PC-9 (cell line): ENCODE measurements at regions of chr3 and their contacts with region 1.

Region 1: DNA sequence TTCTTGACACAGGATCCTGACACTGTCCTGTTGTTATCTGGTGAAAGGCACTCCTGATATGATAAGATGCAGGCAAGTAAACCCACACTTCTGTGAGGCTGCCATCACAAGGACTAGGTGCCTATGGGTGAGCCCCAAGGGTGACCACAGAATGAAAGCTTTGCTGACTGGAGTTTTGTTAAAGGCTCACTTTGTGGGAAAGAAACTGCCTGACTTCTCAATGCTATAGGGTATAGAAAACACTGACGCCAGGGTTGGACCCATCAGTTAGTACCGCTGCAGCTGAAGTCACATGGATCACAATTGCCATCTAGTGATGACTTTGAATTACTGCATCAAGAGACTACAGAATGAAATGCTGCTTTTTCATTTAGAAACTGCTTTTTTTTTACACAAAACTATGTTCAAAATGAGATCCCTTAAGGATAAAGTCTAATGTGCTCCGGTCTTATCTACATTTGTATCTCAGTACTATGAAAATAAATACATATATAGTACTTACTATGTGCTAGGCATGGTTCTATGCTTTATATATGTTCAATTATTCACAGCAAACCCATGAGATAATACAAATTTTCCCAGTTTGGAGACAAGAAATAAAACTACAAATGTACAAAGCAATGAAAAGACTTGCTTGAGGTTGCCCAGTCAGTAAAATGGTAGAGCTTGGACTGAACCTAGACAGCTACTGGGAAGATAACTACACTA is 64.2 kb upstream of the CMSS1 start:
- DNase-seq: peak; percentile 39 to 50
- H3K4me3 ChIP-seq: no peak overlapping the region
- H3K27ac ChIP-seq: no peak overlapping the region
- H3K4me1 ChIP-seq: no peaks in the 10 kb centered on the region
- H3K27me3 ChIP-seq: peaks cover 9% of the 10 kb centered on the region; the same call in 1 of the 2 replicates
- CTCF ChIP-seq: peak; percentile 96

Region 2: DNA sequence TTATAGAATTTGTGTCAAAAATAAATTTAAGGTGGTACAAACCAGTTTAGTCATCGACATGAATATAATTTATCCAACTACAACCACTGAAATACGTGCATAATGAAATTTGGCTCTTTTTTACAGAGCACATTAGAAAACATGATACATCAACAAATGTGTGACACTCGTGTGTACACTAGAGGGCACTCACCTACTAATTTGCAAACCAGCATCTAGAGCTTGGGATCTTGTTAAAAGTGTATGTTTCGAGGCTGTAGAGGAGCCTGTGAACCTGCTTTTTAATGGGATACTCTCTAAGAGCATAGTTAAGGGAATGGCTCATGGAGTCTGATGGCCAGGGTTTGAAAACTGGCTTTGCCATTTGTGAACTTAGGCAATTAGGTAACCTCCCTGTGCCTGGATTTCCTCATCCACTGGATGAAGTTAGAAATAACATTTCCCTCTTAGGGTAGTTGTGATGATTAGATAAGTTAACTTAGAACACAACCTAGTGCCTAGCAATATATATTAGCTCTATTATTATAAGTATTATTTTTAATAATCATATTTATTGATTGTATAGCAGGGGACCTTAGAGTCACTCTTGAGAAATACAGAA is 1151.2 kb before region 1 on chr3:
- CTCF ChIA-PET with region 1: interaction called, 3 read pairs
- POLR2A ChIA-PET with region 1: no interaction called
- intact Hi-C with region 1: loop called (anchors 5 kb)
- DNase-seq: peak; percentile 29 to 61
- H3K4me3 ChIP-seq: no peak overlapping the region
- H3K27ac ChIP-seq: no peak overlapping the region
- H3K4me1 ChIP-seq: no peaks in the 10 kb centered on the region
- H3K27me3 ChIP-seq: no peaks in the 10 kb centered on the region
- CTCF ChIP-seq: peak; percentile 95

Region 3: GRCh38 chr3:98994128-98994762 is 759.2 kb before region 1 on chr3:
- CTCF ChIA-PET with region 1: interaction called, 6 read pairs
- POLR2A ChIA-PET with region 1: no interaction called
- intact Hi-C with region 1: loop called (anchors 10 kb)
- DNase-seq: peak in 1 of 2 experiments; percentile 57
- H3K4me3 ChIP-seq: no peak overlapping the region
- H3K27ac ChIP-seq: no peak overlapping the region
- H3K4me1 ChIP-seq: no peaks in the 10 kb centered on the region
- H3K27me3 ChIP-seq: no peaks in the 10 kb centered on the region
- CTCF ChIP-seq: peak; percentile 97

Region 4: GRCh38 chr3:99172736-99173657 is 580.4 kb before region 1 on chr3:
- CTCF ChIA-PET with region 1: interaction called, 3 read pairs
- POLR2A ChIA-PET with region 1: no interaction called
- intact Hi-C with region 1: loop called (anchors 5 kb)
- DNase-seq: peak; percentile 58 to 59
- H3K4me3 ChIP-seq: no peak overlapping the region
- H3K27ac ChIP-seq: no peak overlapping the region
- H3K4me1 ChIP-seq: no peaks in the 10 kb centered on the region
- H3K27me3 ChIP-seq: no peaks in the 10 kb centered on the region
- CTCF ChIP-seq: peak; percentile 97

Region 5: DNA sequence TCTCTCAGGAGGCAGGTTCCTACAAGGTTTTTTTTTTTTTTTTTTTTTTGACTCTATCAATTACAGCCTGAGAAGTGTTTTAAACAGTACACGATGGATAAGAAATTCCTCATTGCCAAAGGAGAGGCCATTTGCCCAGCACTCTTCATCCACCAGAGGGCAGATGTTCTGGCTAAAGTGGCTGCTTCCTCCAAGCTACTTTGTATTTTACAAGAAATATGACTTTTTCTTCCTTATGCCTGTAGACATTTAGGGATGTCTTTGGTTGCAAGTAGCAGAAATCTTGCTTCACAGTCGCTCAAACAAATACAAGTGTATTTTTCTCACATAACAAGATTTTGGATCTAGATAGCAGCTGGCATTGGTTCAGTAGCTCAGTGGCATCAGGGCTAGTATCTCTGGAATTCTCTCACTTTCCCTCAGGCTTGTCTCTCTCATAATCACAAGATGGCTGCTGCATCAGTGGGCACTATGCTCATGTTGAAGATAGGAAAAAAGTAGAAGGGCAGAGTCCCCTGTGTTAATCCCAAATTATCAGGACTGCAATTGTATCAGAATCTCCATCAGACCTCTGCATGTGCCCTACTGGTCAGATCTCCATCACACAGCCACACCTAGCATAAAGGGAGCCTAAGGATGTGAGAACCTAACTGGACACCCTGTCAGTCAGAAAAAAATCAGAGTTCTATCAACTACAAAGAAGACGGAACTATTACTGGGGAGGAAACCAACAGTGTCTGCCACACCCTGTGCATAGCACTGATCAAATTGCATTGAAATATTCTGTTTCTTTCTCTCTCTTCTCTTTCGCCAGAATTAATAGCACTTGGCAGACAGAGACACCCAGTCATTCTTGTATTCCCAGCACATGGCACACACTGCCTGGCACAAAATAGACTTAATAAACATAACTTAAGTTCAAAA is 253.9 kb before region 1 on chr3:
- CTCF ChIA-PET with region 1: interaction called, 4 read pairs
- POLR2A ChIA-PET with region 1: no interaction called
- intact Hi-C with region 1: loop called (anchors 1 kb)
- DNase-seq: peak; percentile 46 to 48
- H3K4me3 ChIP-seq: no peak overlapping the region
- H3K27ac ChIP-seq: no peak overlapping the region
- H3K4me1 ChIP-seq: no peaks in the 10 kb centered on the region
- H3K27me3 ChIP-seq: no peaks in the 10 kb centered on the region
- CTCF ChIP-seq: peak; percentile 86

Region 6: DNA sequence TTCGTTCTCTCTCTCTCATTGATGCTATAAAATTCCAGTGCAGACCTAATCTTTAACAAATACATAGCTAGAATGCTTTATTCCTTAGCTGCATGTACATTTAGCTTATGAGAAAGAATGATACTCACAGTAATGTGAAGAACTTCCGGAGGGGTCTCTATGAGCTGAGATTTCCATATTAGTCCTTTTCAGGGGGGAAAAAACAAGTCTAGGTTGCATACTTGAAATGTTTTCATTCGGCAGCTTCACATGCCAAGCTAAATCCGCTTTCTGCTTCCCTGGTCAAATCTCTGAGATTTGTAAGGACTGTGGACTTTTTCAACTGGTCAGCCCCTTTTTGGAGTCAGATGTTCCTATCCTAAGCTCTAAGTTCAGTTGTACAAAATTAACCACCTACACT is 226.5 kb before region 1 on chr3:
- CTCF ChIA-PET with region 1: no interaction called
- POLR2A ChIA-PET with region 1: no interaction called
- intact Hi-C with region 1: no loop called
- DNase-seq: no peak
- H3K4me3 ChIP-seq: no peak overlapping the region
- H3K27ac ChIP-seq: no peak overlapping the region
- H3K4me1 ChIP-seq: no peaks in the 10 kb centered on the region
- H3K27me3 ChIP-seq: no peaks in the 10 kb centered on the region
- CTCF ChIP-seq: no peak

Region 7: DNA sequence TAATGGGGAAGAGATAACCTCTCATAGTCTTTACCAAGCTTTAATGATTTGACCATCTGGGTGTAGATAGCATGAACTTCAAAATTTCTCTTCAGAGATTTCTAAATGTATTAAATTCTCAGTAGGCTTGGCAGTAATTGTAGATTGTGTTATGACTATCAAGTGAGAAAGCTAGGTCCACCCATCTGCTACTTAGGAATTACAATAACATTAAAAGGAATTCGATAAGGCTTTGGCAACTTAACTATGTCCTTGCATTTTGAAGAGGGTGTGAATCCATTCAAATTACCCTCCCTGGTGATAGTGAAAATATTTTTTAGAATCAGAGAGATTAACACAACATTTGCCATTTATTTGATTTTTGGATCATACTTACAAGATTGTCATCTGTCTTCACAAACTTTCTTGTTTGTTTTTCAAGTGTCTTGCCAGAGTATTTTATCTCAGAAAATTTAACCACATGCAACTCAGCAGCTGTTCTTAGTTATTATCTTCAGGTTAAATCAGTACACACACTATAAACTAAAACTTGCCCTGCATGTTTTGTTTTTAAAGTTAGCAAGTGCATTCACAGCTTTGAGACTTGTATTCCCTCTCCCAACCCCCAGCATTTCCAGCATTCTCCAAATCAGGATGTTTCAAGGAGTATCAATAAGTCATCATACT is 184.6 kb before region 1 on chr3:
- CTCF ChIA-PET with region 1: no interaction called
- POLR2A ChIA-PET with region 1: no interaction called
- intact Hi-C with region 1: no loop called
- DNase-seq: no peak
- H3K4me3 ChIP-seq: no peak overlapping the region
- H3K27ac ChIP-seq: no peak overlapping the region
- H3K4me1 ChIP-seq: no peaks in the 10 kb centered on the region
- H3K27me3 ChIP-seq: no peaks in the 10 kb centered on the region
- CTCF ChIP-seq: no peak

Region 8: GRCh38 chr3:99731499-99731898 is 21.9 kb before region 1 on chr3:
- CTCF ChIA-PET with region 1: no interaction called
- POLR2A ChIA-PET with region 1: no interaction called
- intact Hi-C with region 1: no loop called
- DNase-seq: no peak
- H3K4me3 ChIP-seq: no peak overlapping the region
- H3K27ac ChIP-seq: no peak overlapping the region
- H3K4me1 ChIP-seq: no peaks in the 10 kb centered on the region
- H3K27me3 ChIP-seq: no peaks in the 10 kb centered on the region
- CTCF ChIP-seq: no peak

Region 9: GRCh38 chr3:100269410-100270217 is 516.2 kb after region 1 on chr3:
- CTCF ChIA-PET with region 1: no interaction called
- POLR2A ChIA-PET with region 1: no interaction called
- intact Hi-C with region 1: no loop called
- DNase-seq: peak; percentile 50 to 96
- H3K4me3 ChIP-seq: peak overlapping the region; percentile 3; the same call in 1 of the 2 replicates
- H3K27ac ChIP-seq: peak overlapping the region; percentile 58
- H3K4me1 ChIP-seq: peaks cover 43% of the 10 kb centered on the region
- H3K27me3 ChIP-seq: no peaks in the 10 kb centered on the region
- CTCF ChIP-seq: no peak